T-cell (primary cell): ENCODE measurements at regions of chr10 and their contacts with region 1.

Region 1: GRCh38 chr10:45076891-45077290 is 76.2 kb downstream of the ZNF22 start:
- DNase-seq: peak in 14 of 35 experiments; percentile 2 to 41 (median 8)
- ATAC-seq: peak in 2 of 4 experiments; percentile 48 to 55
- H3K4me3 ChIP-seq: no peak overlapping the region
- H3K4me3 Mint-ChIP-seq: peak overlapping the region in 1 of 3 donors; percentile 36
- H3K27ac ChIP-seq: no peak overlapping the region
- H3K27ac Mint-ChIP-seq: no peak overlapping the region
- H3K4me1 ChIP-seq: peaks cover 0 to 11% of the 10 kb centered on the region in 2 experiments
- H3K4me1 Mint-ChIP-seq: peaks cover 0 to 7% (median 4%) of the 10 kb centered on the region in 3 donors
- H3K27me3 ChIP-seq: peaks cover 0 to 8% of the 10 kb centered on the region in 2 experiments
- H3K27me3 Mint-ChIP-seq: peaks cover 7 to 29% of the 10 kb centered on the region in 2 donors

Region 2: DNA sequence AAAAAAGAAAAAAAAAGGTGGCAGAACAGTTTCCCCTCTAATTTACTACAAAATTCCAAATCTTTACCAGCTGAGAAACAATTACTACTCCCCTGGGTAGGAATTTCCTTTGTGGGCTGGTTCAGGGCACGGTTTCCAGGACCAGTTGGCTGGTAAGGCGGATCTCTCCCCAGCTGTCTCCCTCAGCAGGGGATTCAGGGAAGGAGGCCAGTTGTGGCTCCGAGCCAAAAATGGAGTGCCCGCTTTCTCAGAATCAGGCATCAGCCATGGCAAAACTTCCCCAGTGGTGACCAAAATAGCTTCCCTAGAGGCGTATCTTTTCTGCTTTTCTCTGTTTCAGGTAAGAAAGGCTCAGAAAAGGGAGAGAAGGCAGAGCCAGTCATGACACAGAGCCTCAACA is 15.1 kb after region 1 on chr10:
- CTCF ChIA-PET with region 1: no interaction called
- POLR2A ChIA-PET with region 1: interaction called in 1 of 2 experiments, 11 read pairs
- DNase-seq: no peak
- ATAC-seq: no peak
- H3K4me3 ChIP-seq: no peak overlapping the region
- H3K4me3 Mint-ChIP-seq: no peak overlapping the region
- H3K27ac ChIP-seq: no peak overlapping the region
- H3K27ac Mint-ChIP-seq: no peak overlapping the region
- H3K4me1 ChIP-seq: no peaks in the 10 kb centered on the region
- H3K4me1 Mint-ChIP-seq: no peaks in the 10 kb centered on the region
- H3K27me3 ChIP-seq: peaks cover 0 to 26% of the 10 kb centered on the region in 2 experiments
- H3K27me3 Mint-ChIP-seq: peaks cover 19 to 42% of the 10 kb centered on the region in 2 donors

Region 3: GRCh38 chr10:46030091-46030937 is 953.4 kb after region 1 on chr10 and contains the start of gene NCOA4:
- CTCF ChIA-PET with region 1: no interaction called
- POLR2A ChIA-PET with region 1: no interaction called
- DNase-seq: peak; percentile 85 to 99 (median 94)
- ATAC-seq: peak; percentile 97 to 98 (median 97)
- H3K4me3 ChIP-seq: peak within 1 kb of the TSS; percentile 75 to 90
- H3K4me3 Mint-ChIP-seq: peak within 1 kb of the TSS; percentile 97 to 98 (median 98)
- H3K27ac ChIP-seq: peak within 1 kb of the TSS; percentile 83
- H3K27ac Mint-ChIP-seq: peak within 1 kb of the TSS; percentile 98
- H3K4me1 ChIP-seq: peaks cover 37 to 39% of the 10 kb centered on the region in 2 experiments
- H3K4me1 Mint-ChIP-seq: peaks cover 50 to 54% (median 53%) of the 10 kb centered on the region in 3 donors
- H3K27me3 ChIP-seq: no peaks in the 10 kb centered on the region
- H3K27me3 Mint-ChIP-seq: no peaks in the 10 kb centered on the region
- total RNA-seq, gene NCOA4: 60.1 to 86.8 (median 75.3) TPM